HEK293 (cell line): ENCODE measurements at regions of chr9 and their contacts with region 1.

Region 1: DNA sequence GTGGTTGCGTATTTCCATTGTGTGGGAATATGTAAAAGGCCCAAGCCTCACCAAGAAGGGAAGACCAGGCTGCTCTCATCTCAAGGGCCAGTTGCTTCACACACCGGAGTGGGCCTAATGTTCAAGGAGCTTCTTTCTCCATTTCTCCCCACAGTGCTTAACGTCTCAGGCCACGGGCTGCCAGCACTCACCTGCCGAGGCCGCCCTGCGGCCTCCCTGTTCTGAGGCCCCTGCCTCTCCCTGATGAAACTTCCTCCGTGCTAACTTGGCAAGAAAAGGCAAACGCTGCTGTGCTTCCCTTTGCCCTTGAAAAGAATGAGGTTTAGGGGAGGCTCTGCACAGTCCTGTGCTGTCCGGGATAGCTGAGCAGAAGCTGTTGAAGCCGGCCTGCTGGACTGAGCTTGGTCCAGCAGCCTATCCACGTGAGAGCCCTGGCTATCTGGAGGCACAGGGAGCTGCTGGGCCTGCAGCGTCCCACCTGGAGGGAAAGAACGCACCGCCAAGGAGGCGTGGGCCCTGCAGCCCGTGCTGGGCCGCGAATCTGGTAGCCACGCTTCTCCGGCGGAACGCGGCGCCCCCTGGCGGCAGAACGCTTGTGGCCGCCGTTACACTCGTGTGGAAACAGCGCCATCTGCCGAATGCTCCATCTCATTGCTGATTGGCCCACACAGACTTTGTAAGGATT is 73.5 kb upstream of the PRSS3 start:
- H3K4me3 ChIP-seq: no peak overlapping the region
- H3K27ac ChIP-seq: no peak overlapping the region
- H3K4me1 ChIP-seq: no peaks in the 10 kb centered on the region
- CTCF ChIP-seq: peak; percentile 100

Region 2: GRCh38 chr9:33404788-33405362 is 316.9 kb before region 1 on chr9:
- CTCF ChIA-PET with region 1: interaction called, 17 read pairs
- POLR2A ChIA-PET with region 1: no interaction called
- H3K4me3 ChIP-seq: no peak overlapping the region
- H3K27ac ChIP-seq: no peak overlapping the region
- H3K4me1 ChIP-seq: no peaks in the 10 kb centered on the region
- CTCF ChIP-seq: no peak

Region 3: DNA sequence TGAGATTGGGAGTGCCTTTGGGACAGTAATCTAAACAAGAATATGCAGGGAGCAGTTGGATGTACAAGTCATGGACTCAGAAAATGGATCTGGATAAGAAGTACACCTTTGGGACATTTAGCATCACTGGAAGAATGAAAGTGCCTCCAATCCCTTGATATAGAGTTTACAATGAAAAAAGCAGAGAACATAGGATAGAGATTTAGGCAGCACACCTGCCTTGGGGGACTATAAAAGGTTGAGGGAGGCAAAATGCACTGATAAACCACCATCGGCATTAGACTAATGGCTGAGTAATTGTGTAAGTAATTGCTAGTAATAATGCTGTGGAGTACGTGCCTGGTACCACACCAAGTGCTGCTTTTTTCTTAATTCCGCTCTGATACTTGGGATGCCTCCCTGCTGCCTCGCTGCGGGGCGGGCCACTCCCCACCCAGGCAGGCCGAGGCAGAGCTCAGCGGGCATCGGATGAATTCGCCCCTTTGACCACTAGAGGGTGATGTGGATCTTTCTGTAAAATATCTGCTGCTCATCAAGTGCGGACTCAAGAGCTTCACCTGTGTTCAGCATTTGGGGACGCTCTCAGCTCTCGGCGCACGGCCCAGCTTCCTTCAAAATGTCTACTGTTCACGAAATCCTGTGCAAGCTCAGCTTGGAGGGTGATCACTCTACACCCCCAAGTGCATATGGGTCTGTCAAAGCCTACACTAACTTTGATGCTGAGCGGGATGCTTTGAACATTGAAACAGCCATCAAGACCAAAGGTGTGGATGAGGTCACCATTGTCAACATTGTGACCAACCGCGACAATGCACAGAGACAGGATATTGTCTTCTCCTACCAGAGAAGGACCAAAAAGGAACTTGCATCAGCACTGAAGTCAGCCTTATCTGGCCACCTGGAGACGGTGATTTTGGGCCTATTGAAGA is 97.9 kb before region 1 on chr9:
- CTCF ChIA-PET with region 1: interaction called, 581 read pairs
- POLR2A ChIA-PET with region 1: interaction called, 8 read pairs
- H3K4me3 ChIP-seq: no peak overlapping the region
- H3K27ac ChIP-seq: no peak overlapping the region
- H3K4me1 ChIP-seq: no peaks in the 10 kb centered on the region; the same call in 1 of the 2 replicates
- CTCF ChIP-seq: peak; percentile 80

Region 4: DNA sequence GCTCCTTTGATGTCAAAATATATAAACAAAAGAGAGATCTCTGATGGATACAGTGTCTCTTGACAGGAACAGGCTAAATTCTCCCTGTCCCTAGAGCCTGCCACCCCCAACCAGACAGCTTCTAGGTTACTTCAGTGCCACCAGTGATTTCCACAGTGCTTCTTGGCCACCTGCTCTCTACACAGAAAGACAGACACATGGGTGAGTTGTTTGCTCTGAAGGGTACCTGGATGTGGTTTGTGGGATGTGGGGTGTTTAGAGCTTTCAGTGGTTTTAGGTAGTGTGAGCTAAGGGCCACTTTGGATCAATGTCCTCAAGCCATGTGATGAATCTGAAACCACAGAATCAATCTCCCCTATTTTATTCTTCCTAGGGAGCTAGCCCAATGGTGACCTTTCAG is 72.4 kb before region 1 on chr9:
- CTCF ChIA-PET with region 1: interaction called, 19 read pairs
- POLR2A ChIA-PET with region 1: no interaction called
- H3K4me3 ChIP-seq: no peak overlapping the region
- H3K27ac ChIP-seq: no peak overlapping the region
- H3K4me1 ChIP-seq: no peaks in the 10 kb centered on the region
- CTCF ChIP-seq: no peak

Region 5: GRCh38 chr9:33682551-33682950 is 39.3 kb before region 1 on chr9:
- CTCF ChIA-PET with region 1: interaction called, 22 read pairs
- POLR2A ChIA-PET with region 1: no interaction called
- H3K4me3 ChIP-seq: no peak overlapping the region
- H3K27ac ChIP-seq: no peak overlapping the region
- H3K4me1 ChIP-seq: peaks cover 8% of the 10 kb centered on the region
- CTCF ChIP-seq: no peak

Region 6: GRCh38 chr9:33703430-33704102 is 18.2 kb before region 1 on chr9:
- CTCF ChIA-PET with region 1: interaction called, 45 read pairs
- POLR2A ChIA-PET with region 1: no interaction called
- H3K4me3 ChIP-seq: no peak overlapping the region
- H3K27ac ChIP-seq: no peak overlapping the region
- H3K4me1 ChIP-seq: no peaks in the 10 kb centered on the region
- CTCF ChIP-seq: no peak

Region 7: GRCh38 chr9:33976414-33976813 is 254.6 kb after region 1 on chr9:
- CTCF ChIA-PET with region 1: no interaction called
- POLR2A ChIA-PET with region 1: no interaction called
- H3K4me3 ChIP-seq: no peak overlapping the region
- H3K27ac ChIP-seq: no peak overlapping the region
- H3K4me1 ChIP-seq: no peaks in the 10 kb centered on the region
- CTCF ChIP-seq: no peak